AG04450 (cell line): ENCODE measurements at regions of chr6 and their contacts with region 1.

Region 1: DNA sequence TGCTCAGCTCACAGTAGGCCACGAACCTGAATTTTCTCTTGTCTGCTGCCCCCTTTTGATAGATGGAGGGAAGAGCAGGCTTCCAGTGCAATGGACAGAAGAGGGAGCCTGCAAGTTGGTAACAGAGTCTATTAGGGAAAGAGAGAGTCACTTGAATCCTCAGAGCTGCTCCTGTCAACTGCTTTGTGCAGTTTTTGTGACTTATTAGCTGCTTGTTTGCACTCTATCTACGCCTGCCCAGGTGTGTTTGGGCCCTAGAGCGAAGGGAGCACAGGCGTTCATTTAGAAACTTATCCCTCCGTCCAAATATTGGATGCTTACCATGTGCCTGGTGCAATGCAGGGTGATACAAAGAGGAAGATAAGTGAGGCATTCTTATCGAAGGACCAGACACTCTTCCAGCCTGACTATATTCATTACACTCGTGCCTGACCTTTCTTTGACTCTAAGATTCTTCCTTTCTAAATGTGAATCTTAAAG is 11.6 kb upstream of the SLC2A12 start:
- DNase-seq: peak; percentile 68
- H3K4me3 ChIP-seq: no peak overlapping the region
- H3K27ac ChIP-seq: no peak overlapping the region
- H3K27me3 ChIP-seq: no peaks in the 10 kb centered on the region
- CTCF ChIP-seq: peak; percentile 98

Region 2: DNA sequence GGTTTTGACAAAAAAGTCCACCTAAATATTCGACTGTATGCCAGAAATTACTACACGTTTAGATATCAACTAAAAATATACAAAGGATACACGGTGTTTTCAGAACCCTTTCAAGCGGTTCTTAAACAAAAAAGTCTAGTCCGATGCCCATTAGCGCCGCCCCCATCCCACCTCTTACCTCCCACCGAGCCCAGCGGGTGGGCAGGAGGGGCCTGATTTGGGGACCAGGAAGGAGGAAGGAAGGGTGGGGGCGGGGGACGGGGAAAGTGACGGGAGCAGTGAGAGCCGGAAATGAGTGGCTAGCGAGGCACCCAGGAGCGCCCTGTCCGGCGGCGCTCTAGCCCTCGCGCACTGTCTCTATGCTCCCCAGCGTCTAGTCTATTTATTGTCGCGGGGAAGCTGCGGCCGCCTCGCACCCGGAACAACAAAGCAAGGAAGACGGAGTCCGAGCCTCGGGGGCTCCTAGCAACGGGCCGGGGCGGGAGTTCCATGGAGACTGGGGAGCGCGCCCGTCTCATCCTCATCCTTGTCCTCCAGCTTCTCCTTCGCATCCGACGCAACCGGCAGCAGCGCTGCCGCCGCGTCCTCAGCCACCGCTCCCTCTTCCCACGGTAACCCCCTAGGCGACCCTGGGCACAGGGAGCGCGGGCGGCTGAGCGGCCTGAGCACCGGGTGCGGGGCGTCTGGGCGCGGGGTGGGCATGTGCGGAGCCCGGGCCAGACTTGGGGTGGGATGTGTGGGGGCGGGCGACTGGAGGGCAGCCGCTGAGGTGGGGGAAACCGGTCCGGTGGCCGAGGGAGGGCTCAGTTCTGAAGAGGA is 111.0 kb before region 1 on chr6 and contains the start of gene TBPL1:
- CTCF ChIA-PET with region 1: interaction called, 17 read pairs
- POLR2A ChIA-PET with region 1: no interaction called
- DNase-seq: peak; percentile 92
- H3K4me3 ChIP-seq: peak within 1 kb of the TSS; percentile 97
- H3K27ac ChIP-seq: peak within 1 kb of the TSS; percentile 92
- H3K27me3 ChIP-seq: no peaks in the 10 kb centered on the region
- CTCF ChIP-seq: no peak
- polyA plus RNA-seq, gene TBPL1: 54.1 and 71.2 TPM in 2 replicates

Region 3: GRCh38 chr6:133973109-133973971 is 90.7 kb before region 1 on chr6:
- CTCF ChIA-PET with region 1: interaction called, 98 read pairs
- POLR2A ChIA-PET with region 1: interaction called, 4 read pairs
- DNase-seq: peak; percentile 42
- H3K4me3 ChIP-seq: no peak overlapping the region
- H3K27ac ChIP-seq: no peak overlapping the region
- H3K27me3 ChIP-seq: no peaks in the 10 kb centered on the region
- CTCF ChIP-seq: peak; percentile 73

Region 4: GRCh38 chr6:134002821-134003220 is 61.2 kb before region 1 on chr6:
- CTCF ChIA-PET with region 1: interaction called, 18 read pairs
- POLR2A ChIA-PET with region 1: no interaction called
- DNase-seq: no peak
- H3K4me3 ChIP-seq: no peak overlapping the region
- H3K27ac ChIP-seq: no peak overlapping the region
- H3K27me3 ChIP-seq: no peaks in the 10 kb centered on the region
- CTCF ChIP-seq: no peak

Region 5: GRCh38 chr6:134047673-134048072 is 16.3 kb before region 1 on chr6:
- CTCF ChIA-PET with region 1: interaction called, 44 read pairs
- POLR2A ChIA-PET with region 1: interaction called, 4 read pairs
- DNase-seq: no peak
- H3K4me3 ChIP-seq: no peak overlapping the region
- H3K27ac ChIP-seq: no peak overlapping the region
- H3K27me3 ChIP-seq: no peaks in the 10 kb centered on the region
- CTCF ChIP-seq: no peak

Region 6: GRCh38 chr6:134097114-134097707 is 33.2 kb after region 1 on chr6:
- CTCF ChIA-PET with region 1: interaction called, 55 read pairs
- POLR2A ChIA-PET with region 1: no interaction called
- DNase-seq: peak; percentile 50
- H3K4me3 ChIP-seq: no peak overlapping the region
- H3K27ac ChIP-seq: no peak overlapping the region
- H3K27me3 ChIP-seq: no peaks in the 10 kb centered on the region
- CTCF ChIP-seq: peak; percentile 64